Naive thymus-derived CD4-positive, alpha-beta T cell (primary cell): ENCODE measurements at regions of chr6 and their contacts with region 1.

Region 1: GRCh38 chr6:10429638-10430427 is 15.0 kb upstream of the TFAP2A start:
- DNase-seq: no peak
- ATAC-seq: peak; percentile 37
- H3K4me3 ChIP-seq: no peak overlapping the region
- H3K4me3 Mint-ChIP-seq: peak overlapping the region in 3 of 10 donors; percentile 37 to 56 (median 37)
- H3K27ac ChIP-seq: no peak overlapping the region
- H3K27ac Mint-ChIP-seq: no peak overlapping the region
- H3K4me1 ChIP-seq: peaks cover 0 to 10% of the 10 kb centered on the region in 2 donors
- H3K4me1 Mint-ChIP-seq: peaks cover 4 to 32% (median 19%) of the 10 kb centered on the region in 7 donors
- H3K27me3 ChIP-seq: peaks cover 0 to 5% of the 10 kb centered on the region in 2 donors
- H3K27me3 Mint-ChIP-seq: peaks cover 46 to 66% (median 52%) of the 10 kb centered on the region in 5 donors

Region 2: DNA sequence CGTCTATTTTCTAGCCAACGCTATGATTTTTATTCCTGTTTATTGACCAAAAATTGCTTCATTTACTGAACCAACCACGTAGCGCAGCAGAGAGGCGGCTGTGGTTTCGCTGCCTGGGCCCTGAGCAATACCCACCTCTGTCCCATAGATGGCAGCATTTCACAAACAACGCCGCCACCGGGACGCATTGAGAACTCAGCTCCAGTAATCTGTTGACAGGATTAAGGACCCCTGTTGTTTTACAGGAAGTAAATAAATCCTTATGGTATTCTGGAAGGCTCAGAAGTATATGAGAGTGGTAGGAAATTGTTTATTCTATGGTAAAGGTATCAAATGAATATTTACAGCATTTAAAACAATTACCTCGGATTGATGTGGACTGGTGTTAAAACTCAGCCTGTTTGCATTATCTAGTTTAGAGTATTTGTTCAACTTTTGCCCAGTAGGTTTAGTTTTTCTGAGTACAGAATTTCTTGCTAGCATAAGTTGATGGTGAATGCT is 1446.6 kb before region 1 on chr6:
- CTCF ChIA-PET with region 1: interaction called, 3 read pairs
- POLR2A ChIA-PET with region 1: no interaction called
- intact Hi-C with region 1: loop called (anchors 1 kb)
- DNase-seq: peak; percentile 12 to 57 (median 35)
- ATAC-seq: peak; percentile 91
- H3K4me3 ChIP-seq: no peak overlapping the region
- H3K4me3 Mint-ChIP-seq: peak overlapping the region in 2 of 10 donors; percentile 15 to 44
- H3K27ac ChIP-seq: no peak overlapping the region
- H3K27ac Mint-ChIP-seq: no peak overlapping the region
- H3K4me1 ChIP-seq: no peaks in the 10 kb centered on the region
- H3K4me1 Mint-ChIP-seq: peaks cover 0 to 2% (median 0%) of the 10 kb centered on the region in 7 donors
- H3K27me3 ChIP-seq: no peaks in the 10 kb centered on the region
- H3K27me3 Mint-ChIP-seq: peaks cover 6 to 39% (median 28%) of the 10 kb centered on the region in 5 donors

Region 3: GRCh38 chr6:9405369-9405768 is 1024.5 kb before region 1 on chr6:
- CTCF ChIA-PET with region 1: no interaction called
- POLR2A ChIA-PET with region 1: no interaction called
- intact Hi-C with region 1: loop called in 1 of 2 experiments (anchors 10 kb)
- DNase-seq: no peak
- ATAC-seq: no peak
- H3K4me3 ChIP-seq: no peak overlapping the region
- H3K4me3 Mint-ChIP-seq: no peak overlapping the region
- H3K27ac ChIP-seq: no peak overlapping the region
- H3K27ac Mint-ChIP-seq: no peak overlapping the region
- H3K4me1 ChIP-seq: no peaks in the 10 kb centered on the region
- H3K4me1 Mint-ChIP-seq: no peaks in the 10 kb centered on the region
- H3K27me3 ChIP-seq: no peaks in the 10 kb centered on the region
- H3K27me3 Mint-ChIP-seq: peaks cover 0 to 10% (median 1%) of the 10 kb centered on the region in 5 donors

Region 4: DNA sequence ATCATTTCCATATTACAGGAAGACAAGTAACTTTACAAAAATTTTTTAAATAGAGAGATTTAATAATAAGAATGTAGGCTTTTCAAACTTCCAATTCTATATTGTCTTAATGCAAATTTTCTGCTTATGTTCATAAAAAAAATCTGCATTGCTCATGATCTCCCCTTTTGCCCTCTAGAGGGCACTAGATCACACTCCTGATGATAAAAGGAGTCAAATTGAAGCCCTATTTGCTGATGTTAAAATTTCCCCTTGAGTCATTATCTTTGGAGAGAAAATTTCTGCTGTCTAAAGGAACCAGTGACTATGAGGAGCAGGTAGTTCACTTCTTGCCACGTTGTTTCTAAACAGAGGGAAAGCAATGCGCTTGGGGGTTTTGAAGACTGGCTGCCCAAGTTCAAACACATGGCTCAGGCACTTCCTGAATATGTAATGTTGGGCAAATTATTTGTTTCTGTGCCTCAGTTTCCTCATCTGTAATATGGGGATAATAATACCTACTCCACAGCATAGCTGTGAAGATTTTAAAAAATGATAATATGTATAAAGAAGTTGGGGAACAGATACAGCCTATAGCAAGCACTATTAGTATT is 889.2 kb before region 1 on chr6:
- CTCF ChIA-PET with region 1: interaction called, 3 read pairs
- POLR2A ChIA-PET with region 1: no interaction called
- intact Hi-C with region 1: loop called in 1 of 2 experiments (anchors 2 kb)
- DNase-seq: no peak
- ATAC-seq: no peak
- H3K4me3 ChIP-seq: no peak overlapping the region
- H3K4me3 Mint-ChIP-seq: no peak overlapping the region
- H3K27ac ChIP-seq: no peak overlapping the region
- H3K27ac Mint-ChIP-seq: no peak overlapping the region
- H3K4me1 ChIP-seq: no peaks in the 10 kb centered on the region
- H3K4me1 Mint-ChIP-seq: no peaks in the 10 kb centered on the region
- H3K27me3 ChIP-seq: no peaks in the 10 kb centered on the region
- H3K27me3 Mint-ChIP-seq: no peaks in the 10 kb centered on the region

Region 5: GRCh38 chr6:10256113-10256690 is 173.6 kb before region 1 on chr6:
- CTCF ChIA-PET with region 1: no interaction called
- POLR2A ChIA-PET with region 1: no interaction called
- intact Hi-C with region 1: loop called in 1 of 2 experiments (anchors 5 kb)
- DNase-seq: no peak
- ATAC-seq: no peak
- H3K4me3 ChIP-seq: no peak overlapping the region
- H3K4me3 Mint-ChIP-seq: no peak overlapping the region
- H3K27ac ChIP-seq: no peak overlapping the region
- H3K27ac Mint-ChIP-seq: no peak overlapping the region
- H3K4me1 ChIP-seq: no peaks in the 10 kb centered on the region
- H3K4me1 Mint-ChIP-seq: no peaks in the 10 kb centered on the region
- H3K27me3 ChIP-seq: no peaks in the 10 kb centered on the region
- H3K27me3 Mint-ChIP-seq: peaks cover 0 to 20% (median 17%) of the 10 kb centered on the region in 5 donors